MCF 10A (cell line): ENCODE measurements at regions of chr1 and their contacts with region 1.

Region 1: GRCh38 chr1:181044449-181044966 is 10.7 kb downstream of the MR1 start:
- DNase-seq: peak; percentile 99
- H3K4me3 Mint-ChIP-seq: peak overlapping the region; percentile 58
- H3K27ac Mint-ChIP-seq: peak overlapping the region; percentile 88
- H3K4me1 Mint-ChIP-seq: peaks cover 41% of the 10 kb centered on the region
- H3K27me3 Mint-ChIP-seq: no peaks in the 10 kb centered on the region
- CTCF ChIP-seq: no peak

Region 2: GRCh38 chr1:180912801-180913565 is 131.5 kb before region 1 on chr1 and contains the start of gene KIAA1614:
- CTCF ChIA-PET with region 1: no interaction called
- POLR2A ChIA-PET with region 1: no interaction called
- intact Hi-C with region 1: no loop called
- DNase-seq: no peak
- H3K4me3 Mint-ChIP-seq: peak within 1 kb of the TSS; percentile 21
- H3K27ac Mint-ChIP-seq: no peak within 1 kb of the TSS
- H3K4me1 Mint-ChIP-seq: no peaks in the 10 kb centered on the region
- H3K27me3 Mint-ChIP-seq: no peaks in the 10 kb centered on the region
- CTCF ChIP-seq: no peak
- total RNA-seq, gene KIAA1614: 0.66 and 1.1 TPM in 2 replicates

Region 3: GRCh38 chr1:181057079-181057478 is 12.6 kb after region 1 on chr1:
- CTCF ChIA-PET with region 1: interaction called, 5 read pairs
- POLR2A ChIA-PET with region 1: interaction called, 24 read pairs
- intact Hi-C with region 1: no loop called
- DNase-seq: no peak
- H3K4me3 Mint-ChIP-seq: no peak overlapping the region
- H3K27ac Mint-ChIP-seq: no peak overlapping the region
- H3K4me1 Mint-ChIP-seq: no peaks in the 10 kb centered on the region
- H3K27me3 Mint-ChIP-seq: no peaks in the 10 kb centered on the region
- CTCF ChIP-seq: no peak

Region 4: GRCh38 chr1:181099152-181100014 is 54.9 kb after region 1 on chr1:
- CTCF ChIA-PET with region 1: interaction called, 4 read pairs
- POLR2A ChIA-PET with region 1: interaction called, 24 read pairs
- intact Hi-C with region 1: no loop called
- DNase-seq: peak; percentile 94
- H3K4me3 Mint-ChIP-seq: peak overlapping the region; percentile 26
- H3K27ac Mint-ChIP-seq: peak overlapping the region; percentile 72
- H3K4me1 Mint-ChIP-seq: peaks cover 65% of the 10 kb centered on the region
- H3K27me3 Mint-ChIP-seq: no peaks in the 10 kb centered on the region
- CTCF ChIP-seq: no peak

Region 5: DNA sequence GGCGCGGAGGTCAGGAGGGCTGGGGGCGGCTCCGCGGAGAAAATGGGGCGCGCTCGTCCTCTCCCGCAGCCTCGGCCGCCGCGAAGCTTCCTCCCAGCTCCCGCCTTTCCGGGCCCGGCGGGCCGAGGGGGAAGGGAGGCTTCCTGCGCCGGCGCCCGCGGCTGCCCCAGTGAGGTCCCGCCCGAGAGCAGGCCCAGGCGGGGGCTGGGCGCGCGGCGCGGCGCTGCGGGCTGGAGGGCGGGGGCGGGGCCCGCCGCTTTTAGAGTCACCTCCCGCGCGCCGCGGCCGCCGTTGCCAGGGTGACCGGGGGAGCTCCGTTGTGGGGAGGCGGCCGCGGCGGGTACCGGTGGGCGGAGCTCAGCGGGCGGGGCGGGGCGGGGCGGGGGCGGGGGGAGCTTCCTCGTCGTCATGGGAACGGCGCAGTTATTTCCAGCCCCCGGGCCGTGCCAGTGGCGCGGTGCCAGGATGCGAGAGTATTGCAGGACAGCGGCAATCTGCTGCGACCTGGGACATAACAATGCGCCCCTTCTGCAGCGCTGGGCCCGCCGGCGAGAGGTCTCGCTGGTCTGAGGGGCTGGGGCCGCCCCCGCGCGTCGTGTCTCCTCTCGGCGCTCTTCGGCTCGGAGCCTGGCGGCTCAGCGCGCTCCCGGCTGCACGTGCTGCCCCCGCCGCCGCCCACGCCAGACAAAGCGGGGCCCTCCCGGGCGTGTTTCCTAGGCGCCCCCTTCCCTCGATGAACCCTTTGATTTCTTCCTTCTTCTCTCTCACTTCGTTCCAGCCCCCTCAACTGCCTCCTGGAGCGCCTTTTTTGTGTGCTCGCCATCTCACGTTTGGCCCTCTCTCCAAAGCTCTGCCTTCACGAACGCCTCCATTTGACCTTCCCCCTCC is 60.9 kb after region 1 on chr1:
- CTCF ChIA-PET with region 1: interaction called, 4 read pairs
- POLR2A ChIA-PET with region 1: interaction called, 24 read pairs
- intact Hi-C with region 1: no loop called
- DNase-seq: peak; percentile 95
- H3K4me3 Mint-ChIP-seq: peak overlapping the region; percentile 65
- H3K27ac Mint-ChIP-seq: peak overlapping the region; percentile 22
- H3K4me1 Mint-ChIP-seq: peaks cover 61% of the 10 kb centered on the region
- H3K27me3 Mint-ChIP-seq: no peaks in the 10 kb centered on the region
- CTCF ChIP-seq: no peak

Region 6: GRCh38 chr1:181117638-181118449 is 73.3 kb after region 1 on chr1:
- CTCF ChIA-PET with region 1: interaction called, 4 read pairs
- POLR2A ChIA-PET with region 1: interaction called, 13 read pairs
- intact Hi-C with region 1: no loop called
- DNase-seq: peak; percentile 89
- H3K4me3 Mint-ChIP-seq: no peak overlapping the region
- H3K27ac Mint-ChIP-seq: peak overlapping the region; percentile 77
- H3K4me1 Mint-ChIP-seq: peaks cover 50% of the 10 kb centered on the region
- H3K27me3 Mint-ChIP-seq: no peaks in the 10 kb centered on the region
- CTCF ChIP-seq: no peak